Aorta (tissue), 5 donors: ENCODE measurements at regions of chr3 and their contacts with region 1.

Region 1: GRCh38 chr3:15427182-15427880 is at the starts of genes EAF1 and METTL6:
- DNase-seq: peak; percentile 91 to 95
- ATAC-seq: peak; percentile 93
- H3K4me3 ChIP-seq: peak within 1 kb of the TSS; percentile 74 to 89
- H3K27ac ChIP-seq: peak within 1 kb of the TSS; percentile 31 to 72
- H3K4me1 ChIP-seq: peaks cover 1 to 4% of the 10 kb centered on the region in 2 donors
- H3K27me3 ChIP-seq: no peaks in the 10 kb centered on the region
- total RNA-seq, gene EAF1: 18.2 to 19.4 TPM
- total RNA-seq, gene METTL6: 13.3 to 16.0 TPM

Region 2: GRCh38 chr3:15512166-15512565 is 84.8 kb after region 1 on chr3:
- intact Hi-C with region 1: no loop called
- DNase-seq: peak; percentile 70 to 79
- ATAC-seq: peak; percentile 76
- H3K4me3 ChIP-seq: no peak overlapping the region
- H3K27ac ChIP-seq: no peak overlapping the region
- H3K4me1 ChIP-seq: peaks cover 0 to 4% of the 10 kb centered on the region in 2 donors
- H3K27me3 ChIP-seq: no peaks in the 10 kb centered on the region

Region 3: DNA sequence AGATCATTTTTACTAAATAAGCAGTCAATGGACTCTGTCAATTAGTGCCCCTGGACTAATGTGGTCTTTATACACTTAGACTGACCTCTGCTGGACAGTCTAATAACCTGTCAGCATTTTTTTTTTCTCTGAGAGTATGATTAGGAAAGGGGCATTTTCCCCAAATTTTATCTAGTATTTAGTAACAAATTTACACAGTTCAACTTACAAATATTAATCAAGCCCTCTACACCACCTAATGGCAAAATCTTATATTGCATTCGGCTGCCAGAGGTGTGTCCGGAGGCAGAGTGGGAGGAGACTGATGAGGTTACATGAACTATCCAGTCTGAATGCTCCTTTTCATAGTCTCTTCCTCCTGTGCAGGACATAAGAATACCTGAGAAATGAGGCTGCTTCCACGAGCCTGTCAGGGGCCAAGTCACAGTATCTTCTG is 130.2 kb after region 1 on chr3:
- intact Hi-C with region 1: loop called (anchors 2 to 5 kb)
- DNase-seq: no peak
- ATAC-seq: peak; percentile 82
- H3K4me3 ChIP-seq: no peak overlapping the region
- H3K27ac ChIP-seq: no peak overlapping the region
- H3K4me1 ChIP-seq: no peaks in the 10 kb centered on the region
- H3K27me3 ChIP-seq: no peaks in the 10 kb centered on the region